ENCODE measurements at regions of chr20 and their contacts with region 1.

Region 1: DNA sequence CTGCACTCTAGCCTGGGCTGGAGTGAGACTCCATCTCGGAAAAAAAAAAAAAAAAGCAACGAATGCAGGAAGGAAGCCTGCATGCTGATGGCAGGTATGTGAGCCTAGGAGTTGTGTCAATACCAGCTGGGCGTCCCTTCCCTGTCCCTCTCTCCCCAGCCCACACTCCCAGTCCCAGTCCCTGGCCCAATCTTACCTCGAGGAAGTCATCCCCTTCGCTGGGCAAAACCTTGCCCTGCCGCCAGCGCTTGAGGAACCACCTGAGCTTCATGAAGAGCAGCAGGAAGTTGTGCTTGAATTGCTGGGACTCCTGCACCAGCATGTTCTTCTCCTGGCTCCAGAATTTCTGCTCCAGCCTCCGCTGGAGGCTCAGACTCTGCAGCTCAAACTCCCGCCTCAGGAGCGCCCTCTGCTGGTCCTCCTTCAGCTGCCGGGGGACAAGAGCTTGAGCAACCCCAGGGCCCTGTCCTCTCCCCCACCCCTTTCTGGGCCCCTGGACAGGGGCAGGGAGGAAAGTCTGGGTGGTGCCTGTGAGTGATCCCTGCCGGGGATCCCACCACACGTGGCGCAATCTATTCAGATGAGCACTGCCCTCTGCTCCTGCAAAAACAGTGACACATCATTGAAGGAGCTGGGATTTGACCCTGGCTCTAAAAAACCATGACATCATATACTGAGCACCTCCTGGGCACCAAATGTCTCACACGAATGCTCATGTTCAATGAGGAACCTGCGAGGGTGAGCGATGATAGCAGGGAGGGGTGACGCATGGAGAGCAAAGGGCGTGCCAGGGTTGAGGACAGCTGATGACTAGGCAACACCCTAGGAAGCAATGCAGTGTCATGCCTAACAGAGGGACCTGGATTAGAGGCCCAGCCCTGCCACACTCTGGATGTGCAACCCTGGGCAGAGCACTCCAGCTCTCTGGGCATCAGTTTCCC is 35.0 kb upstream of the DSN1 start:
- DNase-seq: peak; percentile 81
- ATAC-seq: peak; percentile 84
- H3K4me3 Mint-ChIP-seq: no peak overlapping the region
- H3K27ac Mint-ChIP-seq: no peak overlapping the region
- H3K4me1 Mint-ChIP-seq: peaks cover 4% of the 10 kb centered on the region
- H3K27me3 Mint-ChIP-seq: no peaks in the 10 kb centered on the region

Region 2: GRCh38 chr20:36563374-36563773 is 245.2 kb before region 1 on chr20:
- CTCF ChIA-PET with region 1: no interaction called
- DNase-seq: no peak
- ATAC-seq: no peak
- H3K4me3 Mint-ChIP-seq: no peak overlapping the region
- H3K27ac Mint-ChIP-seq: no peak overlapping the region
- H3K4me1 Mint-ChIP-seq: peaks cover 9% of the 10 kb centered on the region
- H3K27me3 Mint-ChIP-seq: no peaks in the 10 kb centered on the region

Region 3: GRCh38 chr20:36728986-36729385 is 79.6 kb before region 1 on chr20:
- CTCF ChIA-PET with region 1: interaction called, 10 read pairs
- DNase-seq: peak; percentile 49
- ATAC-seq: peak; percentile 61
- H3K4me3 Mint-ChIP-seq: no peak overlapping the region
- H3K27ac Mint-ChIP-seq: peak overlapping the region; percentile 45
- H3K4me1 Mint-ChIP-seq: peaks cover 31% of the 10 kb centered on the region
- H3K27me3 Mint-ChIP-seq: no peaks in the 10 kb centered on the region

Region 4: DNA sequence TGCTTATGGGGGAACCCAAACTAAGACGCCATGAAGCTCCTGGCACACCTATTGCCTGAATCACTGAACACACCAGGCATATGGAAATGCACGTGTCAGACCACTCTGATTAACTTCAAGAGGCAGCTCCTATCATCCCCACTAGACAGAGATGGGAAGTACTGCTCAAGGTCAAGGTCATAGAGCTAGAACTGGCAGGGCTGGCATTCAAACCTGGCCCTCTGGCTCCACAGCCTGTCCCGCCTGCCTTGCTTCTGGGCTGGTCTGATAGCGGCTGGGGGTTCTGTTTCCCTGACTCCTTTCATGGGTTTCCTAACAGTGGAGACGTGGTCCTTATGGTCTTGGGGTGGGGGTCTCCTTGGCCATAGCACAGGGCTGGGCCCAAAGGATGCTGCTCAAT is 12.5 kb before region 1 on chr20:
- CTCF ChIA-PET with region 1: interaction called, 23 read pairs
- DNase-seq: no peak
- ATAC-seq: no peak
- H3K4me3 Mint-ChIP-seq: no peak overlapping the region
- H3K27ac Mint-ChIP-seq: no peak overlapping the region
- H3K4me1 Mint-ChIP-seq: no peaks in the 10 kb centered on the region
- H3K27me3 Mint-ChIP-seq: no peaks in the 10 kb centered on the region

Region 5: DNA sequence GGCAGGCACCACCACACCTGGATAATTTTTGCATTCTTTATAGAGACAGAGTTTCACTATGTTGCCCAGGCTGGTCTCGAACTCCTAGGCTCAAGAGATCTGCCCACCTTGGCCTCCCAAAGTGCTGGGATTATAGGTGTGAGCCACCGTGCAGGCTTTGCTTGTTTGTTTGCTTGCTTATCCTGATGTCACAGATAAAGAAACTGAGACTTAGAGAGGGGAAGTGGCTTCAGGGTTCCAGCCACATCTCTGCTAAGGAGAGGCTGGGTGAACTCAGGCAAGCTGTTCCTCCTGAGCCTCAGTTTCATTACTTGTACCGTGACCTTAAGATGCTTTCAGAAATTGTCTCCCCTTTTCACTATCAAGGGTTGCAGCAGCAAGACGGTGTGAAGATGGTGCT is 18.9 kb after region 1 on chr20:
- CTCF ChIA-PET with region 1: interaction called, 16 read pairs
- DNase-seq: peak; percentile 78
- ATAC-seq: peak; percentile 88
- H3K4me3 Mint-ChIP-seq: no peak overlapping the region
- H3K27ac Mint-ChIP-seq: peak overlapping the region; percentile 78
- H3K4me1 Mint-ChIP-seq: peaks cover 25% of the 10 kb centered on the region
- H3K27me3 Mint-ChIP-seq: no peaks in the 10 kb centered on the region

Region 6: DNA sequence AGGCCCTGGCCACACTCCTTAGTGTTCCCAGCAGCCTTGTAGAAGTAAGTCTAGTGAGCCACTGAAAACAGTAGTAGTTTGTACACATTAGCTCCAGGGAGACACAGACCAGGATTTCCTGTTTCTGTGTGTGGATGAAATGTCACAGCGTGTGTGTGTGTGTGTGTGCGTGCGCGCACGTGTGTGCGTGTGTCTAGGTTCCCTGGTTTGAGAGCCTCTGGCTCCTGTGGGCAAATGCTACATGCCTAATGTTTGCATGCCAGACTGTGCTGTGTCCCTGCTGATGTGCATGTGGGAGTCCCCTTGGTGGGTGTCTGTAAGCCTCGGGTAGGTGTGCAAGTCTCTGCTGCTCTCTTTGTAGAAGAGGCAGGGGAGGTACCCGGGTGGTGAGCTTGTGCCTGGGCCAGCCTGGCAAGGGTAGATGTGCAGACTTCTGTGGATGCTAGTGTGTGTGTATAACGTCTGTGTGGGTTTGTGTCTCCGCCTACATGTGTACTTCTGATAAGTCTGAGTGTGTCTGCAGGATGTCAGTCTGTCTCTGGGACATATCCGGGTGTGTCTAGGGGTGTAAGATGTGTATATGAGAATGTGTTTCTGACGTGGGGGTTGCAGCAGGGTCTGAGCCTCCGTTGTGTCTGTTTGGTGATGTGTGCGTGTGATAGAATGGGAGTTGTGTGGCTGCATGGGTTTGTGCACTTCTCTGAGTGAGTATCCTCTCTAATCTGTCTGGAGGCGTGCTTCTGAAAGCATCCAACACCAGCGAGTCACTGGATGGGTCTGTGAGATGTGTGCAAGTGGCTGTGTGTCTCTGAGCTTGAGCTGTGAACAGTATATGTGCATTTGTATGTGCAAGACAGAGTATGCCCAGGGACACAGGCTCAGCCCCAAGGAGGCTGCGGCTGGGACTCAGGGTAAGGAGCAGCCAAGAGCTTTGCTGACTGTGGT is 48.4 kb after region 1 on chr20:
- CTCF ChIA-PET with region 1: interaction called, 17 read pairs
- DNase-seq: peak; percentile 63
- ATAC-seq: peak; percentile 77
- H3K4me3 Mint-ChIP-seq: no peak overlapping the region
- H3K27ac Mint-ChIP-seq: peak overlapping the region; percentile 13
- H3K4me1 Mint-ChIP-seq: peaks cover 10% of the 10 kb centered on the region
- H3K27me3 Mint-ChIP-seq: peaks cover 10% of the 10 kb centered on the region

Region 7: DNA sequence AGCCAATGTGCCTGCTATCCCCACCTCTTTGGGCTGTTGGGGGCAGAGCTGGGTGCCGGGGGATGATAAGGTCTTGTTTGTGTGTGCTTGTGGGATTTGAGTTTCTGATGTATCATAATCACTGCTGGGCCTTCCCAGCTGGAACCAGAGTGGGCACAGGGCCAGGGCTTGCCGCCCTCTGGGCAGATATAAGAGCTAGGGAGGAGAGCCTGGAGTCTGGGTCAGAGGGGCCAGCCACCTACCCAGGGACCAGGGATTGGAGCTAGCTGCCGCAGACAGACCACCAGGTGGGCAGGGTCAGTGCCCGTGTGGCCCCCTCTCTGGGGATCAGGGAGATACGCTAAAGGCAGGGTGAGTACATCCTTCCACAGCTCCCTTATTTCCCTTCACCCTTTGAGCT is 64.3 kb after region 1 on chr20:
- CTCF ChIA-PET with region 1: interaction called, 10 read pairs
- DNase-seq: no peak
- ATAC-seq: no peak
- H3K4me3 Mint-ChIP-seq: no peak overlapping the region
- H3K27ac Mint-ChIP-seq: no peak overlapping the region
- H3K4me1 Mint-ChIP-seq: peaks cover 2% of the 10 kb centered on the region
- H3K27me3 Mint-ChIP-seq: no peaks in the 10 kb centered on the region

Measured in activated CD8-positive, alpha-beta memory T cell treated with anti-CD3 and anti-CD28 coated beads, Interleukin-2, amount 10 ng/mL, durations not matched to agents 7 days and 5 days (primary cell).